Natural killer cell (primary cell): ENCODE measurements at regions of chr19 and their contacts with region 1.

Region 1: DNA sequence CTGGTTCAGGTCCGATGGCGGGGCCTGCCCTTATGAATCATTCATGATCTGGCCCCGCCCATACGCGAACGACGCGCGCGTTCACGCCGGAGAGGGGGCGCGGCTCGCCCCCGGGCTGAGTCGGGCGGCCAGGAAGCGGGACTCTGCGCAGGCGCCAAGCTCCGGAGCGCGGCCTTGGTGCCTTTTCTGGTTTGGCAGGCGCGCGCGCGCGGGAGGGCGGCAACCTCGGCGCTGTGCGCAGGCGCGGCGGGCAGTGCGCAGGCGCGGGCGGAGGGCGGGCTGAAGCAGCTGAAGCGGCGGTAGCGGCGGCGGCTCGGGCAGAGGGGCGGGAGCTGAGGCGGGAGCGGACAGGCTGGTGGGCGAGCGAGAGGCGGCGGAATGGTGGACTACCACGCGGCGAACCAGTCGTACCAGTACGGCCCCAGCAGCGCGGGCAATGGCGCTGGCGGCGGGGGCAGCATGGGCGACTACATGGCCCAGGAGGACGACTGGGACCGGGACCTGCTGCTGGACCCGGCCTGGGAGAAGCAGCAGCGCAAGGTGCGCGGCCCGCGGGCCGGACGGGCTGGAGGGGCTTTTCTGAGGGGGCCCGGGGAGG is at the start of gene ACTN4:
- DNase-seq: peak; percentile 99 to 100
- ATAC-seq: peak; percentile 90 to 98 (median 91)
- H3K4me3 ChIP-seq: peak within 1 kb of the TSS; percentile 99
- H3K4me3 Mint-ChIP-seq: peak within 1 kb of the TSS; percentile 99
- H3K27ac ChIP-seq: peak within 1 kb of the TSS; percentile 67
- H3K27ac Mint-ChIP-seq: peak within 1 kb of the TSS; percentile 85 to 92
- H3K4me1 ChIP-seq: peaks cover 49% of the 10 kb centered on the region
- H3K4me1 Mint-ChIP-seq: peaks cover 45 to 47% of the 10 kb centered on the region in 2 donors
- H3K27me3 ChIP-seq: no peaks in the 10 kb centered on the region
- H3K27me3 Mint-ChIP-seq: no peaks in the 10 kb centered on the region
- CTCF ChIP-seq: no peak
- total RNA-seq, gene ACTN4: 443 to 595 (median 541) TPM

Region 2: GRCh38 chr19:38666663-38667511 is 19.4 kb after region 1 on chr19:
- intact Hi-C with region 1: loop called (anchors 2 kb)
- DNase-seq: peak; percentile 47 to 71
- ATAC-seq: peak; percentile 72 to 78 (median 77)
- H3K4me3 ChIP-seq: no peak overlapping the region
- H3K4me3 Mint-ChIP-seq: peak overlapping the region; percentile 75
- H3K27ac ChIP-seq: peak overlapping the region; percentile 77
- H3K27ac Mint-ChIP-seq: peak overlapping the region; percentile 85
- H3K4me1 ChIP-seq: peaks cover 98% of the 10 kb centered on the region
- H3K4me1 Mint-ChIP-seq: peaks cover 88 to 89% of the 10 kb centered on the region in 2 donors
- H3K27me3 ChIP-seq: no peaks in the 10 kb centered on the region
- H3K27me3 Mint-ChIP-seq: no peaks in the 10 kb centered on the region
- CTCF ChIP-seq: no peak